Common myeloid progenitor, CD34-positive (primary cell): ENCODE measurements at regions of chr6 and their contacts with region 1.

Region 1: GRCh38 chr6:8212720-8213434 is 110.5 kb upstream of the EEF1E1 start:
- DNase-seq: no peak
- H3K4me3 ChIP-seq: no peak overlapping the region
- H3K27ac ChIP-seq: no peak overlapping the region
- H3K4me1 ChIP-seq: no peaks in the 10 kb centered on the region
- H3K27me3 ChIP-seq: peaks cover 0 to 6% (median 0%) of the 10 kb centered on the region in 5 experiments

Region 2: DNA sequence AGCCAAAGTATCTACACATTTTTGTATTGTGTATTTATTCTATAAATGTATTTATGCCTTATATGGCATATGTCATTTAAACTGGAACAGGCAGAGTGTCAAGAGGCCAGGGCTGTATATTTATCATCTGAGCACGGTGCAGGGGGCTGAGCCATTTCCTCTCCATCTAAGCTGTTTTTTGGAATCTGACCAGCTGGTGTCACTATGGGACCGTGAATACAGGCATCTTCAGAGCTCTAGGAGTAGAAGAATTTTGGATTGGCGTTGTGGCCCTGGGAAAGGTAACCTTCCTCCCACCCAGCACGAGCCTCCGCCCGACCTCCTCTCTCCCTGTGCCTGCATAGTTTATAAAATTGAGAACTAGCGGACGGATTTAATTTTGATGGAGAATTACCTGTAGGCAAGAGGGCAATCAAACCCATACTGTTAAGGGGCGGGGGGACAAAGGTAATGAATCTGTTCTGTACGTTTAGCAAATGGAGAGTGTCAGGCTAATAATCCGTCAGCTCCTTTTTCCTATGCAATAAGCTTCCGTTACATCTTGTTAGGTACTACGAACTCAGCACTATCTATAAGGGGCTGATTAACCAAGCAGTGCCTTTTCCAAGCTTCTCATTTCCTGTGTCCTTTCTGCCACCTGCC is 81.5 kb before region 1 on chr6:
- CTCF ChIA-PET with region 1: interaction called, 146 read pairs
- POLR2A ChIA-PET with region 1: no interaction called
- DNase-seq: peak; percentile 61 to 78 (median 73)
- H3K4me3 ChIP-seq: no peak overlapping the region
- H3K27ac ChIP-seq: no peak overlapping the region
- H3K4me1 ChIP-seq: no peaks in the 10 kb centered on the region
- H3K27me3 ChIP-seq: peaks cover 0 to 6% (median 2%) of the 10 kb centered on the region in 5 experiments

Region 3: GRCh38 chr6:8166156-8166555 is 46.7 kb before region 1 on chr6:
- CTCF ChIA-PET with region 1: no interaction called
- POLR2A ChIA-PET with region 1: no interaction called
- DNase-seq: no peak
- H3K4me3 ChIP-seq: no peak overlapping the region
- H3K27ac ChIP-seq: no peak overlapping the region
- H3K4me1 ChIP-seq: no peaks in the 10 kb centered on the region
- H3K27me3 ChIP-seq: no peaks in the 10 kb centered on the region

Region 4: GRCh38 chr6:8180327-8181159 is 32.3 kb before region 1 on chr6:
- CTCF ChIA-PET with region 1: no interaction called
- POLR2A ChIA-PET with region 1: no interaction called
- DNase-seq: no peak
- H3K4me3 ChIP-seq: no peak overlapping the region
- H3K27ac ChIP-seq: no peak overlapping the region
- H3K4me1 ChIP-seq: peaks cover 0 to 31% (median 12%) of the 10 kb centered on the region in 4 experiments
- H3K27me3 ChIP-seq: no peaks in the 10 kb centered on the region